ENCODE measurements at regions of chr14 and their contacts with region 1.

Region 1: GRCh38 chr14:35687335-35687939 is 121.7 kb downstream of the RALGAPA1 start:
- DNase-seq: peak in 5 of 9 experiments; percentile 3 to 53 (median 24)
- ATAC-seq: peak; percentile 46
- H3K4me3 ChIP-seq: no peak overlapping the region
- H3K4me3 Mint-ChIP-seq: no peak overlapping the region
- H3K27ac ChIP-seq: no peak overlapping the region
- H3K27ac Mint-ChIP-seq: no peak overlapping the region
- H3K4me1 ChIP-seq: no peaks in the 10 kb centered on the region
- H3K4me1 Mint-ChIP-seq: no peaks in the 10 kb centered on the region
- H3K27me3 ChIP-seq: no peaks in the 10 kb centered on the region
- H3K27me3 Mint-ChIP-seq: no peaks in the 10 kb centered on the region
- CTCF ChIP-seq: peak; percentile 73

Region 2: DNA sequence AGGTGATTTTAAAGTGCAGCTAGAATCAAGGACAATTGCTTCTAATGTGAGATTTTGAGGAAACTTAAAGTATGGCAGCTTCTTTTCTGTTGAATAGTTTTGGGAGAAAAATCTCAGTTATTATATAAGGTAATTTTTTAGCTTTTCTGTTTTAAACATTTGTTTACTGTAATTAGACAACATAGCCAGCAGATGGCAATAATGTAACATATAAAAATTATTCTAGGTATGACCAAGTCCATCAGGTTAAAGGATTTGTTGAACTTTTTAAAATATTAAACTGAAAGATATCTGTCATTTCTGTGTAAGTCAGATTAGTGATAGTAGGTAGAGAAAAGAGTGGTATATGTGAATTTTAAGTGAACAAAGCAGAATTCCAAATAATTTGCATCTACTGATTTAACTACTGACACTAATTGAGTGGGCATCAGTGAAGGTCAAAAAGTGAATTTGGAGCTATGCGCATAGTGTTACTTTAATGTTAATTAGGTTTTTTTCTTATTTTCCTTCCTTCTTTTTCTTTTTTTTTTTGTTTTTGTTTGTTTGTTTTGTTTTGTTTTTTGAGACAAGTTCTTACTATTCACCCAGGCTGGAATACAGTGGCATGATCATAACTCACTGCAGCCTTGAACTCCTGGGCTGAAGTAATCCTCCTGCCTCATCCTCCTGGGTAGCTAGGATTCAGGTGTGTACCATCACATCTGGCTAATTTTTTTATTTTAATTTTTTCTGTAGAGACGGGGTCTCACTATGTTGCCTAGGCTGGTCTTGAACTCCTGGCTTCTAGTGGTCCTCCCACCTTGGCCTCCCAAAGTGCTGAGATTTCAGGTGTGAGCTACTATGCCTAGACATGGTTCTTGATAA is 546.5 kb before region 1 on chr14:
- CTCF ChIA-PET with region 1: interaction called, 3 read pairs
- POLR2A ChIA-PET with region 1: no interaction called
- intact Hi-C with region 1: loop called (anchors 1 to 2 kb)
- DNase-seq: peak in 2 of 9 experiments; percentile 40 to 44
- ATAC-seq: peak; percentile 67
- H3K4me3 ChIP-seq: no peak overlapping the region
- H3K4me3 Mint-ChIP-seq: no peak overlapping the region
- H3K27ac ChIP-seq: no peak overlapping the region
- H3K27ac Mint-ChIP-seq: peak overlapping the region; percentile 67
- H3K4me1 ChIP-seq: no peaks in the 10 kb centered on the region
- H3K4me1 Mint-ChIP-seq: peaks cover 19% of the 10 kb centered on the region
- H3K27me3 ChIP-seq: no peaks in the 10 kb centered on the region
- H3K27me3 Mint-ChIP-seq: no peaks in the 10 kb centered on the region
- CTCF ChIP-seq: peak; percentile 83

Region 3: GRCh38 chr14:35438910-35439713 is 248.3 kb before region 1 on chr14:
- CTCF ChIA-PET with region 1: no interaction called
- POLR2A ChIA-PET with region 1: no interaction called
- intact Hi-C with region 1: loop called in 1 of 2 experiments (anchors 10 kb)
- DNase-seq: peak in 1 of 9 experiments; percentile 27
- ATAC-seq: no peak
- H3K4me3 ChIP-seq: no peak overlapping the region
- H3K4me3 Mint-ChIP-seq: no peak overlapping the region
- H3K27ac ChIP-seq: no peak overlapping the region
- H3K27ac Mint-ChIP-seq: no peak overlapping the region
- H3K4me1 ChIP-seq: no peaks in the 10 kb centered on the region
- H3K4me1 Mint-ChIP-seq: no peaks in the 10 kb centered on the region
- H3K27me3 ChIP-seq: no peaks in the 10 kb centered on the region
- H3K27me3 Mint-ChIP-seq: no peaks in the 10 kb centered on the region
- CTCF ChIP-seq: no peak

Measured in CD8-positive, alpha-beta T cell (primary cell).